Left colon (tissue), 2 donors: ENCODE measurements at regions of chr3 and their contacts with region 1.

Region 1: GRCh38 chr3:73624821-73625665 is at the start of gene PDZRN3:
- DNase-seq: peak; percentile 61 to 72
- ATAC-seq: peak; percentile 79
- total RNA-seq, gene PDZRN3: 14.2 to 26.4 TPM

Region 2: DNA sequence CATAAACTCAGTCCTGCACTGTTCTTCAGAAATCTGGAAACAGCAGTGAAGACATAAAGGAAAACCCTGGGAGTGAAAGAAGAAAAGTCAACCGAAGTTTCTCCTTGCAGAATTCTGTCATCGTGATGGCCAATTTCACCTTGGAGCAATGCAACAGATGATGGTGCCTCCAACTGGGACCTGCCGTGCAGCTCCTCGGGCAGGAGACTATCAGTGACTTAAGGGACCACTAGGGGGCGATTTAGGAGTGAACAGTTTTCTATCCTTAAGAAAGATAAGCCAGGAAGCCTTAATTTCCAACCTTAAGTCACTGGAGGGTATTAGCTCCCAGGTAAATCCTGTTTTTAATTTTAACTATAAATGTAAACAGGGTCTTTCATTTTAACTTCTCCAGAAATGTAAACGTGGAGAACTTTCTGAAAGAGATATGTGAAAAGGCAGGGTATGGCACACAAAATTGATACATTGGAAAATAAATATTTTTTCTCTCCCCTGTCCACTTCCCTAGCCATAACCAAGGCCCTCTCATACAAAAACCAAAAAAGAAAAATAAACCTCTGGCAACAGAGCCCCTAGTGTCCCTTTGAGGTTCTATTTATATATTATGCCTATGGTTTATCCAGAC is 116.6 kb before region 1 on chr3:
- intact Hi-C with region 1: loop called in 1 of 2 experiments (anchors 5 kb)
- DNase-seq: peak; percentile 41 to 48
- ATAC-seq: peak; percentile 51

Region 3: GRCh38 chr3:73855813-73856514 is 230.9 kb after region 1 on chr3:
- intact Hi-C with region 1: loop called in 1 of 2 experiments (anchors 10 kb)
- DNase-seq: no peak
- ATAC-seq: peak; percentile 77

Region 4: GRCh38 chr3:73884361-73884760 is 259.3 kb after region 1 on chr3:
- intact Hi-C with region 1: no loop called
- DNase-seq: no peak
- ATAC-seq: no peak